Cardiac septum (tissue), 1 donor: ENCODE measurements at regions of chr3 and their contacts with region 1.

Region 1: GRCh38 chr3:167864552-167864874 is 129.0 kb downstream of the SERPINI1 start:
- DNase-seq: no peak

Region 2: GRCh38 chr3:167814441-167814951 is 50.0 kb before region 1 on chr3:
- intact Hi-C with region 1: loop called (anchors 1 kb)
- DNase-seq: no peak